CD14-positive monocyte (primary cell): ENCODE measurements at regions of chr7 and their contacts with region 1.

Region 1: DNA sequence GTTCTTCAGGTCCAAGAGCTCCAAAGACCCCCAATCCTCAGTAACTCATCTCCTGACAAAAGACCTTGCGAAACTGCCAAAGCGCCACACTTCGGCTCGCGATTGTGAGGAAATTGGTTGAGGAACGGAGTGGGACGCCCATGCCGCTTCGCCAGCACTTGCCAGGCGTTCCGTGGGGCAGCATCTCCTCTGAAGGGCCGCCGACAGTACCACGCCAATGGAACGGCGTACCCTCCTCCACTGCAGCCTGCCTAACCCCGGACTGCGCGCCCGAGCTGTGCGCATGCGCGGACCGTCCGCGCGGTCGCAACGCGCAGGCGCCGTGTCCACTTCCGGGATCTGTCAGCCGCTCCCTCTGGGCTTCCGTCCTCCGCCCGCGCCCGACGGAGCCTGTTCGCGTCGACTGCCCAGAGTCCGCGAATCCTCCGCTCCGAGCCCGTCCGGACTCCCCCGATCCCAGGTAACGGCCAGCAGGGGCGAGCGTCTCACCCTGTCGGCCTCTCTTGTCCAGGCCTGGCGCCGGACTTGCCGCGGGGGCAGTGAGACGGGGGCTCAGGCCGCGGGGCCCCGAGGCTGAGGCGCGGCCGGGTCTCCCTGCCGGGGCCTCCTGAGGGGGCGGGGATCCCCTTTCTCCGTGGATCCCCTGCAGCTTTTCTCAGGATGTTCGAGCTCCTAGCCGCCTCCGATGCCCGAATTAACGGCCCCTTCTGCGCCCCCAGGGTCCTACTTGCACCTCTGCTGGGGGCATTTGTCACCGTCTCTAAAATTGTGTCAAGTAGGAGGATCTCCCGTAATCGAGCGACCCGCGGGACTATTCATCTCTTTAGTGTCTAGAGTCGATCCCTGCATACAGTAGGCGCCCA is at the start of gene ARPC1A:
- DNase-seq: peak; percentile 87 to 92 (median 91)
- H3K4me3 ChIP-seq: peak within 1 kb of the TSS; percentile 62 to 92 (median 84)
- H3K4me3 Mint-ChIP-seq: peak within 1 kb of the TSS; percentile 93 to 94
- H3K27ac ChIP-seq: peak within 1 kb of the TSS; percentile 38 to 90
- H3K27ac Mint-ChIP-seq: peak within 1 kb of the TSS; percentile 86 to 96 (median 91)
- H3K4me1 ChIP-seq: peaks cover 44 to 57% of the 10 kb centered on the region in 2 donors
- H3K4me1 Mint-ChIP-seq: peaks cover 47% of the 10 kb centered on the region
- H3K27me3 ChIP-seq: no peaks in the 10 kb centered on the region
- H3K27me3 Mint-ChIP-seq: peaks cover 0 to 1% (median 0%) of the 10 kb centered on the region in 3 donors
- CTCF ChIP-seq: peak; percentile 22
- polyA plus RNA-seq, gene ARPC1A: 71.7 to 107 (median 104) TPM

Region 2: DNA sequence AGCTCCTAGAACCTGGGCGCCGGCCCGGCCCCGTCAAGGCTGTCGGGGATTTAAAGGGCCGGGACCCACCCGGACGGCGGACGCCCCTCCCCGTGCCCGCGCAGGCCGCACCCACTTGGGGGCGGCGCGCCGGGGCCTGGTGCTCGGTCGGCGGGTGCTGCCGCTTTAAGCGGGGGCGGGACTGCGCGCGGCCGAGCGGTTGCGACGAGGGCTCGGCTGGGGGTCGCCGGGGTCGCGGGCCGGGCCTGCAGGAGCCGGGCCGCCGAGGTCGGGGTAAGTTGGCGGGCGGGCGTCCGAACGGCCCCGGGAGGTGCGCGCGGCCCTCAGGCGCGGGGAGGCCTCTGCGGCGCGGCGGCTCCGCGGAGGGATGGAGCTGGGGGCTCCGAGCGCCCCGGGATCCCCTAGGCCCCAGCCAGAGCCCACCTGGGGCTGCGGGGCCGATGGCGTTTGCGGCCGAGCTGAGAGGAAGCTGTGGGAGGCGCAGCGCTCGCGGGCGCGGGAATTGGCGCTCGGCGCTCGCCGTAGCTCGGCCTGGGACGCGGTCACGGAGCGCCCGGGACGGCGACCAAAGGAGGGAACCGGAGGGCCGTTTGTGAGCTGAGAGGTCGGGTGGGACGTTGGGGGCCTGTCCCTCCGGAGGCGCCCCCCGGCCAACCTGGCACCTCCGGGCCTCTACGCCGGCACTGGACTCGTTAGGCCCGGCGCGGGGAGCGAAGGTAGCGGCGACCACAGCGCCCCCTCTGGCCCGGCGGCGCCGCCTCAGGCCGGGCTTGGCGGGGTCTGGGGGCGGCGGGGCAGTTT is 447.2 kb before region 1 on chr7 and contains the start of gene TRRAP:
- intact Hi-C with region 1: loop called in 1 of 2 experiments (anchors 10 kb)
- DNase-seq: peak; percentile 55 to 71 (median 64)
- H3K4me3 ChIP-seq: peak within 1 kb of the TSS; percentile 88 to 97 (median 89)
- H3K4me3 Mint-ChIP-seq: peak within 1 kb of the TSS; percentile 91 to 93
- H3K27ac ChIP-seq: peak within 1 kb of the TSS; percentile 29 to 88
- H3K27ac Mint-ChIP-seq: peak within 1 kb of the TSS; percentile 18 to 94 (median 81)
- H3K4me1 ChIP-seq: peaks cover 16 to 22% of the 10 kb centered on the region in 2 donors
- H3K4me1 Mint-ChIP-seq: peaks cover 16% of the 10 kb centered on the region
- H3K27me3 ChIP-seq: no peaks in the 10 kb centered on the region
- H3K27me3 Mint-ChIP-seq: peaks cover 10 to 16% (median 13%) of the 10 kb centered on the region in 3 donors
- CTCF ChIP-seq: peak; percentile 100
- polyA plus RNA-seq, gene TRRAP: 0.67 to 12.2 (median 1.2) TPM

Region 3: GRCh38 chr7:99143853-99144672 is 181.7 kb before region 1 on chr7 and contains the start of gene SMURF1:
- intact Hi-C with region 1: loop called in 1 of 2 experiments (anchors 5 kb)
- DNase-seq: peak; percentile 46 to 78 (median 65)
- H3K4me3 ChIP-seq: peak within 1 kb of the TSS; percentile 79 to 97 (median 94)
- H3K4me3 Mint-ChIP-seq: peak within 1 kb of the TSS; percentile 88 to 95
- H3K27ac ChIP-seq: peak within 1 kb of the TSS; percentile 57 to 79
- H3K27ac Mint-ChIP-seq: peak within 1 kb of the TSS; percentile 77 to 92 (median 85)
- H3K4me1 ChIP-seq: peaks cover 17 to 31% of the 10 kb centered on the region in 2 donors
- H3K4me1 Mint-ChIP-seq: peaks cover 36% of the 10 kb centered on the region
- H3K27me3 ChIP-seq: no peaks in the 10 kb centered on the region
- H3K27me3 Mint-ChIP-seq: peaks cover 0 to 4% (median 0%) of the 10 kb centered on the region in 3 donors
- CTCF ChIP-seq: no peak
- polyA plus RNA-seq, gene SMURF1: 0.48 to 15.8 (median 1.6) TPM

Region 4: GRCh38 chr7:99392677-99393354 is 67.0 kb after region 1 on chr7:
- intact Hi-C with region 1: no loop called
- DNase-seq: peak; percentile 56 to 64 (median 61)
- H3K4me3 ChIP-seq: peak overlapping the region in 1 of 3 experiments; percentile 47
- H3K4me3 Mint-ChIP-seq: peak overlapping the region; percentile 46 to 58
- H3K27ac ChIP-seq: peak overlapping the region; percentile 10 to 65
- H3K27ac Mint-ChIP-seq: peak overlapping the region; percentile 77 to 92 (median 88)
- H3K4me1 ChIP-seq: peaks cover 12 to 31% of the 10 kb centered on the region in 2 donors
- H3K4me1 Mint-ChIP-seq: peaks cover 28% of the 10 kb centered on the region
- H3K27me3 ChIP-seq: no peaks in the 10 kb centered on the region
- H3K27me3 Mint-ChIP-seq: peaks cover 0 to 2% (median 0%) of the 10 kb centered on the region in 3 donors
- CTCF ChIP-seq: no peak

Region 5: DNA sequence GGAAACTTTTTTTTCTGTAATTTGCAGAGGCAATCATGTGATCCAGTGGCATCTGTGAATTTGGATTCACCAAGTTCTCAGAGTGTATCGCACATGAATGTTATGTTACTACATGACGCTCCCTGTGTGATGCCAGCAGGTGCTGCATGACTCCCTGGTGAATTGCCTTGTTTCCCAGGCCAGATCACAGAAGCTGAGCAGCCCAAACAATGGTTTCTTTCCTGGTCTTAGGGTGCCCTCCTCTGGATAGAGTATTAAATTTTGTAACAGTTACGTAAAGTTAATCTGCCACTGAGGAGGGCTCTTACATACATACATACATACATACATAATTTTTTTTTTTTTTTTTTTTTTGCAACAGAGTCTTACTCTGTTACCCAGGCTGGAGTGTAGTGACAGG is 727.4 kb after region 1 on chr7:
- intact Hi-C with region 1: no loop called
- DNase-seq: peak; percentile 22 to 39 (median 27)
- H3K4me3 ChIP-seq: no peak overlapping the region
- H3K4me3 Mint-ChIP-seq: no peak overlapping the region
- H3K27ac ChIP-seq: no peak overlapping the region
- H3K27ac Mint-ChIP-seq: no peak overlapping the region
- H3K4me1 ChIP-seq: peaks cover 12 to 14% of the 10 kb centered on the region in 2 donors
- H3K4me1 Mint-ChIP-seq: peaks cover 10% of the 10 kb centered on the region
- H3K27me3 ChIP-seq: no peaks in the 10 kb centered on the region
- H3K27me3 Mint-ChIP-seq: peaks cover 0 to 2% (median 0%) of the 10 kb centered on the region in 3 donors
- CTCF ChIP-seq: no peak